ENCODE measurements at regions of chr14 and their contacts with region 1.

Region 1: GRCh38 chr14:51873221-51873893 is 12.9 kb downstream of the GNG2 start:
- DNase-seq: no peak
- ATAC-seq: peak; percentile 79
- H3K4me3 Mint-ChIP-seq: peak overlapping the region; percentile 50
- H3K27ac Mint-ChIP-seq: peak overlapping the region; percentile 89
- H3K4me1 Mint-ChIP-seq: peaks cover 56% of the 10 kb centered on the region
- H3K27me3 Mint-ChIP-seq: no peaks in the 10 kb centered on the region
- CTCF ChIP-seq: no peak

Region 2: GRCh38 chr14:51889851-51890250 is 16.5 kb after region 1 on chr14:
- CTCF ChIA-PET with region 1: interaction called, 3 read pairs
- POLR2A ChIA-PET with region 1: interaction called, 10 read pairs
- intact Hi-C with region 1: no loop called
- DNase-seq: no peak
- ATAC-seq: no peak
- H3K4me3 Mint-ChIP-seq: no peak overlapping the region
- H3K27ac Mint-ChIP-seq: no peak overlapping the region
- H3K4me1 Mint-ChIP-seq: peaks cover 34% of the 10 kb centered on the region
- H3K27me3 Mint-ChIP-seq: no peaks in the 10 kb centered on the region
- CTCF ChIP-seq: no peak